ENCODE measurements at regions of chr1 and their contacts with region 1.

Region 1: GRCh38 chr1:153633716-153634665 is at the start of gene CHTOP:
- DNase-seq: peak; percentile 99
- H3K4me3 Mint-ChIP-seq: peak within 1 kb of the TSS; percentile 97
- H3K27ac Mint-ChIP-seq: peak within 1 kb of the TSS; percentile 100
- H3K4me1 Mint-ChIP-seq: peaks cover 32% of the 10 kb centered on the region
- H3K27me3 Mint-ChIP-seq: no peaks in the 10 kb centered on the region
- CTCF ChIP-seq: no peak
- total RNA-seq, gene CHTOP: 147 and 156 TPM in 2 replicates

Region 2: GRCh38 chr1:153343811-153344530 is 290.0 kb before region 1 on chr1:
- CTCF ChIA-PET with region 1: no interaction called
- POLR2A ChIA-PET with region 1: no interaction called
- intact Hi-C with region 1: no loop called
- DNase-seq: no peak
- H3K4me3 Mint-ChIP-seq: no peak overlapping the region
- H3K27ac Mint-ChIP-seq: no peak overlapping the region
- H3K4me1 Mint-ChIP-seq: peaks cover 7% of the 10 kb centered on the region
- H3K27me3 Mint-ChIP-seq: peaks cover 83% of the 10 kb centered on the region
- CTCF ChIP-seq: no peak

Region 3: GRCh38 chr1:153404768-153405167 is 229.2 kb before region 1 on chr1:
- CTCF ChIA-PET with region 1: no interaction called
- POLR2A ChIA-PET with region 1: no interaction called
- intact Hi-C with region 1: no loop called
- DNase-seq: peak; percentile 73
- H3K4me3 Mint-ChIP-seq: no peak overlapping the region
- H3K27ac Mint-ChIP-seq: no peak overlapping the region
- H3K4me1 Mint-ChIP-seq: no peaks in the 10 kb centered on the region
- H3K27me3 Mint-ChIP-seq: peaks cover 67% of the 10 kb centered on the region
- CTCF ChIP-seq: peak; percentile 86

Region 4: DNA sequence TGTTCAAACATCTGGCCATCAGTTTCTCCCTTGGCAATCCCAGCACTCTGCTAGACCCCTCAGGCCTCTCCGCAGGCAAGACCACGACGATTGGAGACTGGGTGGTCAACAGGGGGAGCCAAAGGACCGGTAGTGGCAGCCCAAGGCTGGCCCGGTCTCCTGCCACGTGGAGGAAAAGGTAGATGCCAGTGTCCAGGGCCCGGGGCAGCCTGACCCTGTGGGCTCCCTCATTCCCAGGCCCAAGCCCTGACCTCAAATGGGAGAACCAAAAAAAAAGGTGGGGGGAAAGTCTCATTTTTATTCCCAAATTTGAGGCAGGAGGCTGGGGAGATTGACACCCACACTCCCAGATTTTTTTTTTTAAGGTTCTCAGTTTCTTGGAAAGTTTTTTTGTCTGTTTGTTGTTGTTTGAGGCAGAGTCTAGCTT is 123.0 kb before region 1 on chr1:
- CTCF ChIA-PET with region 1: interaction called, 15 read pairs
- POLR2A ChIA-PET with region 1: interaction called, 9 read pairs
- intact Hi-C with region 1: no loop called
- DNase-seq: peak; percentile 87
- H3K4me3 Mint-ChIP-seq: no peak overlapping the region
- H3K27ac Mint-ChIP-seq: peak overlapping the region; percentile 73
- H3K4me1 Mint-ChIP-seq: peaks cover 60% of the 10 kb centered on the region
- H3K27me3 Mint-ChIP-seq: no peaks in the 10 kb centered on the region
- CTCF ChIP-seq: peak; percentile 100

Region 5: DNA sequence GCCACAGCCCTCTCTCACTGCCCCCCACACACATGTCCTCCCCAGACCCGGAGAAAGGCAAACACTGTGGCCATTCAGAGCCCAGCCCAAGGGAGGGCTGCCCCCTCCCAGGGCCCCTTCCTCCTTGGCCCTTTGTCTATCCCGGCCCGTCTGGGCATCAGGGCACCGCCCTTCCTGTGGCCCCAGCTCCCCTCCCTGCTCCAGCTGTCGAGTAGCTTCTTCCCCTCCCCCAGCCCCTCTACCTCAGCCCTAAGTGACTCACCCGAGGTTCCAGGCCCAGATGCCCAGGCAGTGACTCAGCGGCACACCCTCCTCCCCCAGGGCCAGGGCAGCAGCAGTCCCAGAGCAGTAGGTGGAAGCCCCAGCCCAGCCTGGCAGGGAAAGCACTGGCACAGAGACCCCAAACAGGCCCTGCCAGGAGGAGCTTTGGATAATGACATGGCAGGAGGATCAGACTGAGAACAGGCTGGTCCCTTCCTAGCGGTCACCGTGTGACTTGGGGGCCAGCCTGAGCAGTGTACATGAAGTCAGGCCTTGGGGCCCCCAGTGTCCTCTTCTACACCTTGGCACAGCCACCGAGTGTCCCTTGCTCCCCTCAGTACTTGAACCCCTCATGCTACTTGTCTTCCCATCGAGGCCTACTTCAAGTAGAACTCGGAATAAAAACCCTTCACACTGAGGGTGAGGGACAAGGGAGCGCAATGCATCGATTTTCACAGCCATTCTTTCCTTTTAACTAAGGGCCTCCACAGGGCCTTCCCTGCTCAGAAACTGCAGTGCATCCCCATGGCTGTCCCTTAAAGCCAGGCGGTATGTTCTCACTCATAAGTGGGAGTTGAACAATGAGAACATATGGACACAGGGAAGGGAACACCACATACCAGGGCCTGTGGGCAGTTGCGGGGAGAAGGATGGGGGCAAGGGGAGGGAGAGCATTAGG is 67.3 kb before region 1 on chr1:
- CTCF ChIA-PET with region 1: interaction called, 66 read pairs
- POLR2A ChIA-PET with region 1: interaction called, 84 read pairs
- intact Hi-C with region 1: no loop called
- DNase-seq: peak; percentile 100
- H3K4me3 Mint-ChIP-seq: peak overlapping the region; percentile 67
- H3K27ac Mint-ChIP-seq: peak overlapping the region; percentile 92
- H3K4me1 Mint-ChIP-seq: peaks cover 64% of the 10 kb centered on the region
- H3K27me3 Mint-ChIP-seq: no peaks in the 10 kb centered on the region
- CTCF ChIP-seq: no peak

Region 6: GRCh38 chr1:153617675-153618074 is 16.3 kb before region 1 on chr1:
- CTCF ChIA-PET with region 1: interaction called, 195 read pairs
- POLR2A ChIA-PET with region 1: interaction called, 1,272 read pairs
- intact Hi-C with region 1: loop called (anchors 1 kb)
- DNase-seq: peak; percentile 86
- H3K4me3 Mint-ChIP-seq: peak overlapping the region; percentile 90
- H3K27ac Mint-ChIP-seq: peak overlapping the region; percentile 76
- H3K4me1 Mint-ChIP-seq: peaks cover 47% of the 10 kb centered on the region
- H3K27me3 Mint-ChIP-seq: no peaks in the 10 kb centered on the region
- CTCF ChIP-seq: peak; percentile 90

Region 7: GRCh38 chr1:153670859-153671627 is 37.1 kb after region 1 on chr1 and contains the start of gene ILF2:
- CTCF ChIA-PET with region 1: interaction called, 3 read pairs
- POLR2A ChIA-PET with region 1: interaction called, 50 read pairs
- intact Hi-C with region 1: loop called (anchors 1 kb)
- DNase-seq: peak; percentile 100
- H3K4me3 Mint-ChIP-seq: no peak within 1 kb of the TSS
- H3K27ac Mint-ChIP-seq: no peak within 1 kb of the TSS
- H3K4me1 Mint-ChIP-seq: peaks cover 5% of the 10 kb centered on the region
- H3K27me3 Mint-ChIP-seq: no peaks in the 10 kb centered on the region
- CTCF ChIP-seq: peak; percentile 27
- total RNA-seq, gene ILF2: 348 and 374 TPM in 2 replicates

Region 8: GRCh38 chr1:153977250-153978240 is 343.6 kb after region 1 on chr1 and contains the start of gene JTB:
- CTCF ChIA-PET with region 1: no interaction called
- POLR2A ChIA-PET with region 1: interaction called, 20 read pairs
- intact Hi-C with region 1: no loop called
- DNase-seq: peak; percentile 93
- H3K4me3 Mint-ChIP-seq: peak within 1 kb of the TSS; percentile 98
- H3K27ac Mint-ChIP-seq: peak within 1 kb of the TSS; percentile 96
- H3K4me1 Mint-ChIP-seq: peaks cover 23% of the 10 kb centered on the region
- H3K27me3 Mint-ChIP-seq: no peaks in the 10 kb centered on the region
- CTCF ChIP-seq: no peak
- total RNA-seq, gene JTB: 194 and 224 TPM in 2 replicates

Measured in MCF 10A (cell line).